Aorta (tissue), 5 donors: ENCODE measurements at regions of chr4 and their contacts with region 1.

Region 1: GRCh38 chr4:113869743-113870375 is 108.3 kb upstream of the CAMK2D start:
- DNase-seq: peak in 1 of 2 donors; percentile 57
- ATAC-seq: no peak
- H3K4me3 ChIP-seq: no peak overlapping the region
- H3K27ac ChIP-seq: no peak overlapping the region
- H3K4me1 ChIP-seq: peaks cover 0 to 3% of the 10 kb centered on the region in 2 donors
- H3K27me3 ChIP-seq: no peaks in the 10 kb centered on the region

Region 2: GRCh38 chr4:113657586-113658233 is 212.1 kb before region 1 on chr4:
- intact Hi-C with region 1: no loop called
- DNase-seq: no peak
- ATAC-seq: no peak
- H3K4me3 ChIP-seq: no peak overlapping the region
- H3K27ac ChIP-seq: peak overlapping the region in 1 of 2 donors; percentile 40
- H3K4me1 ChIP-seq: peaks cover 3 to 4% of the 10 kb centered on the region in 2 donors
- H3K27me3 ChIP-seq: no peaks in the 10 kb centered on the region

Region 3: DNA sequence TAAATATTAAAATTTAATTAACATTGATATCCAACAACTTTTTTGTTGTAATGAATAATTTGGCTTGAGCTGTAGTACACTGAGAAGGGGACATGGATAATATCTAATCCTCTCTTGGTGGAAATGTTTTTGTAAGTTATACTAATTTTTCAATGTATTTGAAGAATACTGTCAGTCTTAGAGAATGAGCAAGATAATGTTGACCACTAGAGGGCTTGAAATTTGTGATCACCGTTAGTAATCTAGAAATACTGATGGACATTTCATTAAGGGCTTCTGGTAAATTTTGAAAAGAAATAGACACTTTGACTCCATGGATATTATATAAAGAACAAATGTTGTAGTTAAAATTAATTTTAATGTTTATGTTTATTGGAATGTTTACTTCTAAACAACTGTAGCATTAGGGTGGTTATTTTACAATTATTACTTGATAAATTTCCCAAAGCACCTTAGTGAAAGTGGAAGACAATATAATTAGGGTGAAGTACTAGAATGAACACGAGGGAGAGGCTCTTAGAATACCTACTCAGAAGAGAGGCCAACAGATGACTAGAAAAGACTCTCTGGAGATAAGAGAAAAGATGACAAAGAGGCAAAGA is 88.3 kb before region 1 on chr4:
- intact Hi-C with region 1: loop called in 1 of 2 experiments (anchors 5 kb)
- DNase-seq: no peak
- ATAC-seq: no peak
- H3K4me3 ChIP-seq: no peak overlapping the region
- H3K27ac ChIP-seq: no peak overlapping the region
- H3K4me1 ChIP-seq: no peaks in the 10 kb centered on the region
- H3K27me3 ChIP-seq: no peaks in the 10 kb centered on the region